Spleen (tissue), 13 donors: ENCODE measurements at regions of chr11 and their contacts with region 1.

Region 1: GRCh38 chr11:127345819-127346459 is 345.4 kb upstream of the KIRREL3 start:
- DNase-seq: no peak
- H3K4me3 ChIP-seq: no peak overlapping the region
- H3K27ac ChIP-seq: no peak overlapping the region
- H3K4me1 ChIP-seq: no peaks in the 10 kb centered on the region
- H3K27me3 ChIP-seq: no peaks in the 10 kb centered on the region
- CTCF ChIP-seq: peak in 9 of 11 experiments; percentile 5 to 62 (median 46)
- POLR2A ChIP-seq: no peak

Region 2: GRCh38 chr11:126440792-126441514 is 905.0 kb before region 1 on chr11:
- intact Hi-C with region 1: loop called (anchors 10 kb)
- DNase-seq: peak; percentile 91
- H3K4me3 ChIP-seq: no peak overlapping the region
- H3K27ac ChIP-seq: peak overlapping the region in 2 of 8 donors; percentile 22 to 51
- H3K4me1 ChIP-seq: peaks cover 3 to 36% (median 13%) of the 10 kb centered on the region in 6 donors
- H3K27me3 ChIP-seq: peaks cover 0 to 31% (median 0%) of the 10 kb centered on the region in 7 donors
- CTCF ChIP-seq: peak; percentile 95 to 99 (median 97)
- POLR2A ChIP-seq: no peak

Region 3: GRCh38 chr11:126607374-126607773 is 738.6 kb before region 1 on chr11:
- intact Hi-C with region 1: loop called (anchors 10 kb)
- DNase-seq: no peak
- H3K4me3 ChIP-seq: no peak overlapping the region
- H3K27ac ChIP-seq: no peak overlapping the region
- H3K4me1 ChIP-seq: peaks cover 0 to 7% (median 2%) of the 10 kb centered on the region in 6 donors
- H3K27me3 ChIP-seq: peaks cover 0 to 59% (median 0%) of the 10 kb centered on the region in 7 donors
- CTCF ChIP-seq: peak in 9 of 11 experiments; percentile 39 to 60 (median 50)
- POLR2A ChIP-seq: no peak